GM12878 (cell line): ENCODE measurements at regions of chr15 and their contacts with region 1.

Region 1: DNA sequence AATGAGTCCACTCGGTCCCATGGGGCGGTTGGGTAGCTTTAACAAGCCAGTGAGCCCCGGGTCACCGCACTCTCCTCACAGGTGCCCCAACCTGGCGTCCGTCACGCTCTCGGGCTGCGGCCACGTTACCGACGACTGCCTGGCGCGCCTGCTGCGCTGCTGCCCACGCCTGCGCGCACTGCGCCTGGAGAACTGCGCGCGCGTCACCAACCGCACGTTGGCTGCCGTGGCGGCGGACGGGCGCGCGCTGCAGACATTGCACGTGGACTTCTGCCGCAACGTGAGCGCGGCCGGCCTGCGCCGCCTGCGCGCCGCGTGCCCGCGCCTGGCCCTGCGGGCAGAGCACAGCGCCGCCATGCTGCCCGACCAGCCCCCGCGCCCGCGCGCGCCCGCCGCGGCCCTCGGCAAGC is 3.4 kb downstream of the FBXL22 start:
- DNase-seq: peak; percentile 77
- ATAC-seq: peak; percentile 80
- H3K4me3 ChIP-seq: peak overlapping the region; percentile 87
- H3K27ac ChIP-seq: peak overlapping the region; percentile 85
- H3K4me1 ChIP-seq: peaks cover 34% of the 10 kb centered on the region
- H3K27me3 ChIP-seq: no peaks in the 10 kb centered on the region
- CTCF ChIP-seq: no peak; a peak in 1 of 6 replicates
- EP300 ChIP-seq: no peak
- POLR2A ChIP-seq: peak; percentile 94
- RAD21 ChIP-seq: no peak

Region 2: GRCh38 chr15:63288778-63289378 is 311.7 kb before region 1 on chr15:
- CTCF ChIA-PET with region 1: interaction called, 4 read pairs
- POLR2A ChIA-PET with region 1: no interaction called
- RAD21 ChIA-PET with region 1: interaction called, 7 read pairs
- SMC1A ChIA-PET with region 1: interaction called, 5 read pairs
- in situ Hi-C with region 1: loop called (anchors 25 kb)
- intact Hi-C with region 1: loop called (anchors 5 kb)
- DNase-seq: no peak
- ATAC-seq: peak; percentile 82
- H3K4me3 ChIP-seq: no peak overlapping the region
- H3K27ac ChIP-seq: no peak overlapping the region
- H3K4me1 ChIP-seq: no peaks in the 10 kb centered on the region
- H3K27me3 ChIP-seq: no peaks in the 10 kb centered on the region
- CTCF ChIP-seq: peak; percentile 54 to 71 (median 60)
- EP300 ChIP-seq: no peak
- POLR2A ChIP-seq: no peak
- RAD21 ChIP-seq: peak; percentile 87

Region 3: DNA sequence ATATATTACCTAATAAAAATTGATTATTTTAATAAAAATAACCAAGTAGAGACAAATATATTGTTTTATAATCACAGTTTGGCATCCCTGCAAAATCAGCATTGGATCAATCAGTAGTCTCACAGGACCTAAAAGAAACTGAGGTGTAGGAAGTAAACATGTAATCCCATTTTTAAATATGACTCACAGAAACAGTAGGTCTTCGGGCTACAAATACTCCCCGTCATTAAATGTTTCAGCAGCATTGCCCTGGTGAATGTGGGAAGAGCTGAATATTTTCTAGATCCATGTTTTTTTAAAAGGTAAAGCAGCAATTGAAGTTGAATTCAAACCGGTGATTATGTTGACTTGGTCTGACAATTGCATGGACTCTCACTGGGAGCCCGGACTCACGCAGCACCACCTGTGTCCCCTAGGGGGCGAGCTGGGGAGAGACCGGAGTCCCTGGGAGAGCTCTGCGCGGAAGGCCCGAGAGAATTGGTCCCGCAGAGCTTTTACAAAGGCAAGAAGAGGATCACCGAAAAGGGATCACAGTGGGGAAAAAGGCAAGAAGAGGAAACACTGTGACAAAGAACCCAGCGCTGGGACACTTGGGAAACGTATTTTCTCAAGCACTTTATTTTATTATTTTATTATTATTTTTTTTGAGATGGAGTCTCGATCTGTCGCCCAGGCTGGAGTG is 113.4 kb before region 1 on chr15:
- CTCF ChIA-PET with region 1: interaction called, 12 read pairs
- POLR2A ChIA-PET with region 1: interaction called, 10 read pairs
- RAD21 ChIA-PET with region 1: interaction called, 40 read pairs
- SMC1A ChIA-PET with region 1: interaction called, 57 read pairs
- in situ Hi-C with region 1: no loop called
- intact Hi-C with region 1: no loop called
- DNase-seq: no peak
- ATAC-seq: peak; percentile 74
- H3K4me3 ChIP-seq: peak overlapping the region; percentile 42; the same call in 1 of the 2 replicates
- H3K27ac ChIP-seq: peak overlapping the region; percentile 89
- H3K4me1 ChIP-seq: peaks cover 57% of the 10 kb centered on the region
- H3K27me3 ChIP-seq: no peaks in the 10 kb centered on the region
- CTCF ChIP-seq: peak; percentile 84 to 98 (median 97)
- EP300 ChIP-seq: no peak
- POLR2A ChIP-seq: no peak
- RAD21 ChIP-seq: peak; percentile 82

Region 4: DNA sequence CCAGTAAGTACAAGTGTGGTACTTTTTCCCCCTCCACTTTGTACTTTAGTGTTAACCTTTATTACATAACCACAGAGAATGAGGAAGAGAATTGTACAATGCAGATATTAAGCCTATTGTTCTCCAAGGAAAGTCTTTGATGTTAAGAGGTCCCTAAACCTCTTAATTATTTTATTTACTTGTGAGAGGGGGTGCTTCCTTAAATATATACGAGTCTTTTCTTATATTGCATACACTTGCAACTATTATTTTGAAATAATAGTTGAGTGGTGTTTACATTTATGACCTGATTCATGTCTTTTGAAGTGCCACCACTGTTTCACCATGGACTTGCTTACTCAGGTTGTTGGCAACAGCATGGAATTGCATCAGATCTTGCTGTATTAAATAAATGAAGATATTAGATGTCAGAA is 86.1 kb before region 1 on chr15:
- CTCF ChIA-PET with region 1: interaction called, 12 read pairs
- POLR2A ChIA-PET with region 1: interaction called, 12 read pairs
- RAD21 ChIA-PET with region 1: interaction called, 24 read pairs
- SMC1A ChIA-PET with region 1: interaction called, 12 read pairs
- in situ Hi-C with region 1: no loop called
- intact Hi-C with region 1: loop called (anchors 10 kb)
- DNase-seq: no peak
- ATAC-seq: 0 out of 3 replicates have a peak, but pooled peaks have one; percentile 12
- H3K4me3 ChIP-seq: 0 out of 2 replicates have a peak overlapping the region, but pooled peaks have one; percentile 21
- H3K27ac ChIP-seq: peak overlapping the region; percentile 67; the same call in 1 of the 2 replicates
- H3K4me1 ChIP-seq: peaks cover 45% of the 10 kb centered on the region
- H3K27me3 ChIP-seq: no peaks in the 10 kb centered on the region
- CTCF ChIP-seq: no peak
- EP300 ChIP-seq: no peak
- POLR2A ChIP-seq: no peak
- RAD21 ChIP-seq: no peak

Region 5: GRCh38 chr15:63553388-63553791 is 47.2 kb before region 1 on chr15:
- CTCF ChIA-PET with region 1: interaction called, 5 read pairs
- POLR2A ChIA-PET with region 1: interaction called, 5 read pairs
- RAD21 ChIA-PET with region 1: interaction called, 7 read pairs
- SMC1A ChIA-PET with region 1: interaction called, 11 read pairs
- in situ Hi-C with region 1: no loop called
- intact Hi-C with region 1: no loop called
- DNase-seq: no peak
- ATAC-seq: peak; percentile 47
- H3K4me3 ChIP-seq: no peak overlapping the region
- H3K27ac ChIP-seq: no peak overlapping the region
- H3K4me1 ChIP-seq: peaks cover 5% of the 10 kb centered on the region
- H3K27me3 ChIP-seq: no peaks in the 10 kb centered on the region
- CTCF ChIP-seq: no peak
- EP300 ChIP-seq: no peak
- POLR2A ChIP-seq: no peak
- RAD21 ChIP-seq: no peak

Region 6: DNA sequence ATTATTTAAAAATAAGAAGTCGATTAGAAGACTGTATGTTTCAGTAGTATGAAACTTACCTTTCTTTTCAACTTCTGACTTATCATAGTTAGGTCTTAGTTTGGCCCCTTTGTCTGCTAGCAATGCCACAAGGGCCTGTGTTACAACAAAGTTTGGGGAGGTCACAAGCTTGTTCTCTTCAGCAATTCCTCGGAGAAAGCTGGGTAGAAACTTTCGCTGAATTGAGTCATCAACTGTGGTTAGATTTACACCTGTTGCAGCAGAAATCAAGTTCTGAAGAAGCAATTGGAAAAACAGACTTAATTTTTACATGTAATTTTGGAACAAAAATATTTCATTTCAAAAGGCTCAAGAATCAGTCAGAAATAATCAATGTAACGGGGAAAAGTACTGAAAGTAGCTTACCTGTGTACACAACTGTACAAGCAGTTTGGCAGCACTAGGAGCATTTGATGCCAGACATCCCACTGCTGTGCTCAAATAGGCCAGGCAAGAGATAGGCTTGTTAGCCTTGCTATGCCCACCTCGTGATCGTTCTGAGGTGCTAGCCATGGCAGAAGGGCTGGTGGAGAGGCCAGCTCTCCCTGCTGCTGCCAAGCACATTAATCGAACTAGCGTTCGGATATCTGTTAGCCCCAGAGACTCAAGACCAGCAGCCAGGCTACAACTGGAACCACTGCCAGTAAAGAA is 55.2 kb after region 1 on chr15:
- CTCF ChIA-PET with region 1: no interaction called
- POLR2A ChIA-PET with region 1: no interaction called
- RAD21 ChIA-PET with region 1: no interaction called
- SMC1A ChIA-PET with region 1: no interaction called
- in situ Hi-C with region 1: no loop called
- intact Hi-C with region 1: no loop called
- DNase-seq: no peak
- ATAC-seq: no peak
- H3K4me3 ChIP-seq: no peak overlapping the region
- H3K27ac ChIP-seq: no peak overlapping the region; the same call in 1 of the 2 replicates
- H3K4me1 ChIP-seq: no peaks in the 10 kb centered on the region
- H3K27me3 ChIP-seq: no peaks in the 10 kb centered on the region
- CTCF ChIP-seq: no peak
- EP300 ChIP-seq: no peak
- POLR2A ChIP-seq: no peak
- RAD21 ChIP-seq: no peak

Region 7: DNA sequence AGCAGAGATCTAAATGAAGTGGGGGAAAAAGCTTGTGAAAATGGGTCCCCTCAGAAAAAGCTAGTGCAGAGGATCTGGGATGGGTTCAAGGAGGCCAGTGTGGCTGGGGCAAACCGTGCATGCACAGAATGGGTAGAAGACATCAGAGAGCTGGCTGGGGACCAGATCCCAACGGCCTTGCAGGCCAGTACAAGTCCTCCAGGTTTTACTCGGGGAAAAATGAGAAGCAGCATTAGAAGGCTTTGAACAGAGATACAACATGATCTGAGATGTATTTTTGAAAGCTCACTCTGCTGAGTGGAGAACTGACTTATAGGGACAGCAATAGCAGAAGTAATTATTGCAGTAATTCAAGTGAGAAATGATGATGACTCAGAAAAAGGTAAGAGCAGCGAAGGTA is 118.7 kb after region 1 on chr15:
- CTCF ChIA-PET with region 1: no interaction called
- POLR2A ChIA-PET with region 1: no interaction called
- RAD21 ChIA-PET with region 1: no interaction called
- SMC1A ChIA-PET with region 1: no interaction called
- in situ Hi-C with region 1: no loop called
- intact Hi-C with region 1: no loop called
- DNase-seq: no peak
- ATAC-seq: no peak
- H3K4me3 ChIP-seq: no peak overlapping the region
- H3K27ac ChIP-seq: no peak overlapping the region
- H3K4me1 ChIP-seq: peaks cover 3% of the 10 kb centered on the region; the same call in 1 of the 2 replicates
- H3K27me3 ChIP-seq: no peaks in the 10 kb centered on the region
- CTCF ChIP-seq: no peak
- EP300 ChIP-seq: no peak
- POLR2A ChIP-seq: no peak
- RAD21 ChIP-seq: no peak

Region 8: GRCh38 chr15:63833021-63833696 is 232.5 kb after region 1 on chr15:
- CTCF ChIA-PET with region 1: no interaction called
- POLR2A ChIA-PET with region 1: no interaction called
- RAD21 ChIA-PET with region 1: no interaction called
- SMC1A ChIA-PET with region 1: no interaction called
- in situ Hi-C with region 1: no loop called
- intact Hi-C with region 1: no loop called
- DNase-seq: no peak
- ATAC-seq: peak; percentile 68
- H3K4me3 ChIP-seq: peak overlapping the region; percentile 99
- H3K27ac ChIP-seq: peak overlapping the region; percentile 99
- H3K4me1 ChIP-seq: peaks cover 10% of the 10 kb centered on the region
- H3K27me3 ChIP-seq: no peaks in the 10 kb centered on the region
- CTCF ChIP-seq: no peak
- EP300 ChIP-seq: no peak
- POLR2A ChIP-seq: no peak
- RAD21 ChIP-seq: no peak

Region 9: GRCh38 chr15:64112904-64113303 is 512.3 kb after region 1 on chr15:
- CTCF ChIA-PET with region 1: no interaction called
- POLR2A ChIA-PET with region 1: no interaction called
- RAD21 ChIA-PET with region 1: no interaction called
- SMC1A ChIA-PET with region 1: no interaction called
- in situ Hi-C with region 1: no loop called
- intact Hi-C with region 1: no loop called
- DNase-seq: no peak
- ATAC-seq: peak; percentile 44; the same call in 2 of the 3 replicates
- H3K4me3 ChIP-seq: no peak overlapping the region
- H3K27ac ChIP-seq: peak overlapping the region; percentile 30; the same call in 1 of the 2 replicates
- H3K4me1 ChIP-seq: peaks cover 26% of the 10 kb centered on the region
- H3K27me3 ChIP-seq: no peaks in the 10 kb centered on the region
- CTCF ChIP-seq: no peak
- EP300 ChIP-seq: no peak
- POLR2A ChIP-seq: no peak
- RAD21 ChIP-seq: no peak